A549 (cell line): ENCODE measurements at regions of chr10 and their contacts with region 1.

Region 1: DNA sequence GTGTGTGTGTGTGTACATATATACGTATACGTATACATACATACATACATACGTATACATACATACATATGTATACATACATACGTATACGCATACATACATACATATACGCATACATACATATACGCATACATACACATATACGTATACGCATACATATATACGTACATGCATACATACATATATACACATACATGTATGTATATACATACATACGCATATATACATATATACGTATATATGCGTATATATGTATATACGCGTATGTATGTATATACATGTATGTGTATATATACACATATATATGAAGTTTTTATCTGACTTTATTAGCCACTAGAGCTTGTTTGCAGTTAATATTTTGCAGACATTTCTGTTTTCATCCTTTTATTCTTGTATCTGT is 63.3 kb downstream of the TBC1D12 start:
- DNase-seq: no peak
- ATAC-seq: no peak
- H3K4me3 ChIP-seq: no peak overlapping the region
- H3K27ac ChIP-seq: no peak overlapping the region
- H3K4me1 ChIP-seq: no peaks in the 10 kb centered on the region
- CTCF ChIP-seq: no peak
- EP300 ChIP-seq: no peak
- POLR2A ChIP-seq: no peak
- RAD21 ChIP-seq: no peak

Region 2: GRCh38 chr10:95133997-95134396 is 668.3 kb after region 1 on chr10:
- CTCF ChIA-PET with region 1: no interaction called
- POLR2A ChIA-PET with region 1: interaction called, 11 read pairs
- DNase-seq: no peak
- ATAC-seq: no peak
- H3K4me3 ChIP-seq: no peak overlapping the region
- H3K27ac ChIP-seq: no peak overlapping the region
- H3K4me1 ChIP-seq: no peaks in the 10 kb centered on the region
- CTCF ChIP-seq: no peak
- EP300 ChIP-seq: no peak
- POLR2A ChIP-seq: no peak
- RAD21 ChIP-seq: no peak